Heart left ventricle (tissue), 16 donors: ENCODE measurements at regions of chr5 and their contacts with region 1.

Region 1: DNA sequence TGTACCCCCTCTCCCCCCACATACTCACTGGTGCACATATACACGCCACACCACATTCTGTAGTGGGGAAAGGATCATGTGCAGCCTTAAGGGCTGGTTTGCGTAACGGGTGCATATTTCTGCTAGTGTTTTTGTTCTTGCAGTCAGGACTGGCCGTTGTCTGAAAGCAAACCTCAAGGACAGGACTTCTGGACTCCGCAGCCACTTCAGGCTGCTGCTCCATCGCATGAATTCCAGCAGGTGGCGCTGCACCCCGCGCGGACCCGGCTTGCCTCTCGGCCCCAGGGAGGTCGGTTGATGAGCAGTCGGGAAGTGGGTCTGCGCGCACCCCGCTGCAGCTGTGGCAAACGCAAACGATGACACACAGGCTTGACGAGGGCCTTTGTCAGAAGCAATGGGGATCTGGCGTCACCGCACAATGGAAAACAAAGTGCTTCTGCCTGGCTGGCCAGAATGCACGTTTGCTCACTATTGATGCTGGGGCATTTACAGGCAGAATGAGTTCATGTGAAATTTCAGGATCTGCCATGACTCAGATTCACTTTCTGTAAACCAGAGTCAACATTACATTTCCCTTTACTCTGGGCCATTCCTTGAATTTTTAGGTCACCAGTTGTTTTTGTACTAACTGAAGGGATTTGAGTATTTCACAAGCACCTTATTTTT is 36.3 kb upstream of the GLRX start:
- DNase-seq: peak; percentile 85 to 96 (median 91)
- ATAC-seq: peak; percentile 62 to 80 (median 73)
- H3K4me3 ChIP-seq: peak overlapping the region in 9 of 12 donors; percentile 18 to 46 (median 30)
- H3K27ac ChIP-seq: peak overlapping the region; percentile 82 to 97 (median 90)
- H3K4me1 ChIP-seq: peaks cover 0 to 72% (median 44%) of the 10 kb centered on the region in 12 donors
- H3K27me3 ChIP-seq: no peaks in the 10 kb centered on the region
- CTCF ChIP-seq: peak; percentile 97 to 99 (median 98)
- POLR2A ChIP-seq: peak in 1 of 2 donors; percentile 37

Region 2: DNA sequence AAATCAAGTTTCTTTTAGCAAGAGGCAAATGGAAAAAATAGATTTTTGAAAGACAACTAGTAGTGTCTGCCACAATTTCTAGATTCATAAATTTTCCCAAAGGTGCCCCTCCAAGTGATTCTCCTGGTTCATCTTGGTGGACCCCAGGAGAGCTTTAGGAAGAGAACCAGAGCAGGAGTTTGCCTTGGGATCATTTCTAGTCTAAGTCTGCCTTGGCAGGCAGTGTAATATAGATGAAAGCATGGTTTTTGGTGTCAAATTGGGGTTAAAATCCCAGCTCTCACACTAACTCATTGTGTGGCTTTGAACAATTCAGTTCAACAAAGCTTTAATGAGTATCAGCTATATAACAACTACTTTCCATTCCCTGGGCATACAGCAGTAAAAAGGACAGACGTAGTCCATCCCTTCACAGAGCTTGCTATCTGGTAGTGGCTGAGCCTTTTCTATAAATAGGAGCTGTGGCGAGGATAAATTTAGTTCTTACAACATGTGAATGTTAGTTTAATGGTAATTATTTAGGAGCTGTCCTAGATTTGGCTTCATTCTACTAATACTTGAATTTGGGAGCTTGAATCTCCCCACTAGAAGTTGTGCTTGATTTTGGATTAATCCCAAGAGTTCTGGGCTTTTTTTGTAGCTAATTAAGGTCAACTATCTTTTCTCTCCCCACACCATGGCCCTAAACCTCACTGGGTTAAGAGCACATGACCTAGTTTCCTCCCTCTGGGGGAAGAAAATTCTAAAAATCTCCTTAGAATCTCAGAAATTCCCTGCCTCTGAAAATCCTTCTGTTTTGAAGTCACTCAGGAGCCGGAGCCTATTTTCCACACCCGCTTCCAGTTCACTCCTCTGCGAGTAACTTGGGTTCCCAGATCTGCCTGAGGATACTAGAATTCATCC is 376.5 kb after region 1 on chr5:
- intact Hi-C with region 1: loop called in 1 of 10 experiments (anchors 5 kb)
- DNase-seq: peak in 1 of 5 donors; percentile 23
- ATAC-seq: peak; percentile 93 to 98 (median 96)
- H3K4me3 ChIP-seq: peak overlapping the region in 1 of 12 donors; percentile 8
- H3K27ac ChIP-seq: peak overlapping the region; percentile 70 to 95 (median 80)
- H3K4me1 ChIP-seq: peaks cover 0 to 21% (median 13%) of the 10 kb centered on the region in 12 donors
- H3K27me3 ChIP-seq: no peaks in the 10 kb centered on the region
- CTCF ChIP-seq: no peak
- POLR2A ChIP-seq: peak in 1 of 2 donors; percentile 19

Region 3: GRCh38 chr5:96331210-96331609 is 472.4 kb after region 1 on chr5:
- intact Hi-C with region 1: loop called in 9 of 10 experiments (anchors 1 to 2 kb)
- DNase-seq: no peak
- ATAC-seq: no peak
- H3K4me3 ChIP-seq: no peak overlapping the region
- H3K27ac ChIP-seq: no peak overlapping the region
- H3K4me1 ChIP-seq: peaks cover 0 to 25% (median 0%) of the 10 kb centered on the region in 12 donors
- H3K27me3 ChIP-seq: no peaks in the 10 kb centered on the region
- CTCF ChIP-seq: no peak
- POLR2A ChIP-seq: no peak

Region 4: GRCh38 chr5:96601811-96602244 is 743.0 kb after region 1 on chr5:
- intact Hi-C with region 1: loop called (anchors 5 to 10 kb)
- DNase-seq: peak in 2 of 5 donors; percentile 37 to 48
- ATAC-seq: peak; percentile 68 to 92 (median 85)
- H3K4me3 ChIP-seq: peak overlapping the region in 3 of 12 donors; percentile 15 to 27 (median 27)
- H3K27ac ChIP-seq: no peak overlapping the region
- H3K4me1 ChIP-seq: peaks cover 0 to 9% (median 0%) of the 10 kb centered on the region in 12 donors
- H3K27me3 ChIP-seq: no peaks in the 10 kb centered on the region
- CTCF ChIP-seq: peak; percentile 76 to 90 (median 82)
- POLR2A ChIP-seq: no peak